Activated B cell treated with CpG ODN at 0.5 μM for 24 hours (primary cell): ENCODE measurements at regions of chr3 and their contacts with region 1.

Region 1: GRCh38 chr3:129418041-129418973 is 10.1 kb downstream of the EFCAB12 start:
- DNase-seq: no peak
- ATAC-seq: no peak
- H3K4me3 Mint-ChIP-seq: no peak overlapping the region
- H3K27ac Mint-ChIP-seq: no peak overlapping the region
- H3K4me1 Mint-ChIP-seq: peaks cover 7% of the 10 kb centered on the region
- H3K27me3 Mint-ChIP-seq: no peaks in the 10 kb centered on the region
- CTCF ChIP-seq: no peak

Region 2: DNA sequence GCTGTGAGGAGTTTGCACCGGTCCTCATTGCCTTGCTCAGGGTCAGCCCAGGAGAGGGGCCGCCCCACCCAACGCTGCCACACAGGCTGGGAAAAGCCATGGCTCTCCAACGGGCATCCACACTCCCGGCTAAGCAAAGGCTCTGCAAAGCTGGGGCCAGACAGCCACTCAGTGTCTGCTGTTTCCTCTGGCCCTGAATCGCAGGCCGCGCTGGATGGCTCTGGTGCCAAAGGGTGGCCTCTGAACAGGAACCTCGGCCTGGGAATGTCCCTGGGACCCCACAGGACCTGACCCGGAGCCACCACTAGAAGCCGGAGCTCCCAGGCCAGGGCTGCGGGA is 810.6 kb before region 1 on chr3:
- CTCF ChIA-PET with region 1: no interaction called
- POLR2A ChIA-PET with region 1: no interaction called
- intact Hi-C with region 1: no loop called
- DNase-seq: no peak
- ATAC-seq: no peak
- H3K4me3 Mint-ChIP-seq: peak overlapping the region; percentile 24
- H3K27ac Mint-ChIP-seq: no peak overlapping the region
- H3K4me1 Mint-ChIP-seq: peaks cover 2% of the 10 kb centered on the region
- H3K27me3 Mint-ChIP-seq: no peaks in the 10 kb centered on the region
- CTCF ChIP-seq: no peak

Region 3: GRCh38 chr3:129352045-129352444 is 66.3 kb before region 1 on chr3:
- CTCF ChIA-PET with region 1: no interaction called
- POLR2A ChIA-PET with region 1: no interaction called
- intact Hi-C with region 1: no loop called
- DNase-seq: no peak
- ATAC-seq: no peak
- H3K4me3 Mint-ChIP-seq: no peak overlapping the region
- H3K27ac Mint-ChIP-seq: no peak overlapping the region
- H3K4me1 Mint-ChIP-seq: peaks cover 1% of the 10 kb centered on the region
- H3K27me3 Mint-ChIP-seq: peaks cover 6% of the 10 kb centered on the region
- CTCF ChIP-seq: no peak

Region 4: GRCh38 chr3:129867506-129868124 is 449.3 kb after region 1 on chr3:
- CTCF ChIA-PET with region 1: no interaction called
- POLR2A ChIA-PET with region 1: interaction called, 11 read pairs
- intact Hi-C with region 1: no loop called
- DNase-seq: no peak
- ATAC-seq: no peak
- H3K4me3 Mint-ChIP-seq: no peak overlapping the region
- H3K27ac Mint-ChIP-seq: no peak overlapping the region
- H3K4me1 Mint-ChIP-seq: peaks cover 11% of the 10 kb centered on the region
- H3K27me3 Mint-ChIP-seq: no peaks in the 10 kb centered on the region
- CTCF ChIP-seq: no peak